GM12878 (cell line): ENCODE measurements at regions of chr2 and their contacts with region 1.

Region 1: GRCh38 chr2:196182439-196183171 is 11.2 kb upstream of the STK17B start:
- DNase-seq: peak; percentile 71
- ATAC-seq: peak; percentile 87
- H3K4me3 ChIP-seq: no peak overlapping the region
- H3K27ac ChIP-seq: peak overlapping the region; percentile 42
- H3K4me1 ChIP-seq: peaks cover 27% of the 10 kb centered on the region
- H3K27me3 ChIP-seq: no peaks in the 10 kb centered on the region
- CTCF ChIP-seq: no peak
- EP300 ChIP-seq: peak; percentile 31 to 64
- POLR2A ChIP-seq: no peak
- RAD21 ChIP-seq: no peak

Region 2: DNA sequence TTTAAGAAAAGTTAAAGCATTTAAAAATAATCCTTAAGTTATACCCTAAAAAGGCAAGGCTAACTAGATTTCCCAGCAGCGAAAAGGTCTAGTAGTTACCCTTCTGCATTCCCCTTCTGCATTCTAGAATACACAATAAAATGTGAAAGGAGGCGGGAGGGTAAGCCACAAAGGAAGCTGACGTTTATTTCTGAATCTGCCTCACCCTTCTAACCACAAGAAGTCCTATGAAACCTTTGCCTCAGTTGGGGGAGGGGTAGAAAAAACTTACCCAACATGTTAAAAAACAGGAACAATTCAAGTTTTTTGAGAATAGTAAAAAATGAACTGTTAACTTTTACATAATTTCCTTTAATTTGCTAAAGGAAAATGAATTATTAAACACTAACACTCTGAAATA is 22.5 kb before region 1 on chr2:
- CTCF ChIA-PET with region 1: interaction called, 11 read pairs
- POLR2A ChIA-PET with region 1: interaction called, 64 read pairs
- RAD21 ChIA-PET with region 1: interaction called, 93 read pairs
- SMC1A ChIA-PET with region 1: interaction called, 74 read pairs
- in situ Hi-C with region 1: no loop called
- intact Hi-C with region 1: no loop called
- DNase-seq: peak; percentile 86
- ATAC-seq: peak; percentile 64
- H3K4me3 ChIP-seq: no peak overlapping the region; the same call in 1 of the 2 replicates
- H3K27ac ChIP-seq: peak overlapping the region; percentile 77
- H3K4me1 ChIP-seq: peaks cover 29% of the 10 kb centered on the region
- H3K27me3 ChIP-seq: no peaks in the 10 kb centered on the region
- CTCF ChIP-seq: no peak
- EP300 ChIP-seq: peak; percentile 93
- POLR2A ChIP-seq: no peak
- RAD21 ChIP-seq: peak; percentile 17; the same call in 1 of the 2 replicates

Region 3: GRCh38 chr2:196213252-196213980 is 30.8 kb after region 1 on chr2:
- CTCF ChIA-PET with region 1: interaction called, 4 read pairs
- POLR2A ChIA-PET with region 1: interaction called, 9 read pairs
- RAD21 ChIA-PET with region 1: interaction called, 27 read pairs
- SMC1A ChIA-PET with region 1: interaction called, 17 read pairs
- in situ Hi-C with region 1: no loop called
- intact Hi-C with region 1: loop called (anchors 2 kb)
- DNase-seq: no peak
- ATAC-seq: no peak
- H3K4me3 ChIP-seq: no peak overlapping the region
- H3K27ac ChIP-seq: no peak overlapping the region
- H3K4me1 ChIP-seq: peaks cover 14% of the 10 kb centered on the region
- H3K27me3 ChIP-seq: no peaks in the 10 kb centered on the region
- CTCF ChIP-seq: no peak
- EP300 ChIP-seq: no peak
- POLR2A ChIP-seq: no peak
- RAD21 ChIP-seq: no peak

Region 4: DNA sequence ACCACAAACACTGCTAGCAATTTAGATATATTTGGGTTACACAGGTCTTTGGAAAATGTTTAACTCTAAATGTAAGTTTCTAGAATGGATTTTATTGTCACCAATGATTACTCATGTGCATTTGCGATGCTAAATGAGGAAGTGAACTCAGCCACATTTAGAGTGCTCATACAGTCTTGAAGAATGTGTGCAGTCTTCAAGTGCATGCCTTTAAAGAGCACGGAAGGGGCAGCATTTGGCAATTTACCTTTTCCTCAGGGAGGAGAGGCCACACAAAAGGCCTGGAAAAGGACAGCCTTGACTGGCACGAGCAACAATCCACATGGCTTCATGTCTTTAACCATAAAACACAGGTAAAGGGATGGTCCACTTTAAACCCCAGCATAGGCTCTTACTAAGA is 67.3 kb after region 1 on chr2:
- CTCF ChIA-PET with region 1: interaction called, 5 read pairs
- POLR2A ChIA-PET with region 1: interaction called, 10 read pairs
- RAD21 ChIA-PET with region 1: interaction called, 13 read pairs
- SMC1A ChIA-PET with region 1: interaction called, 12 read pairs
- in situ Hi-C with region 1: no loop called
- intact Hi-C with region 1: no loop called
- DNase-seq: no peak
- ATAC-seq: peak; percentile 92
- H3K4me3 ChIP-seq: no peak overlapping the region
- H3K27ac ChIP-seq: no peak overlapping the region
- H3K4me1 ChIP-seq: peaks cover 4% of the 10 kb centered on the region
- H3K27me3 ChIP-seq: no peaks in the 10 kb centered on the region
- CTCF ChIP-seq: no peak
- EP300 ChIP-seq: no peak; a peak in 1 of 4 replicates
- POLR2A ChIP-seq: no peak
- RAD21 ChIP-seq: peak; percentile 10; the same call in 1 of the 2 replicates

Region 5: DNA sequence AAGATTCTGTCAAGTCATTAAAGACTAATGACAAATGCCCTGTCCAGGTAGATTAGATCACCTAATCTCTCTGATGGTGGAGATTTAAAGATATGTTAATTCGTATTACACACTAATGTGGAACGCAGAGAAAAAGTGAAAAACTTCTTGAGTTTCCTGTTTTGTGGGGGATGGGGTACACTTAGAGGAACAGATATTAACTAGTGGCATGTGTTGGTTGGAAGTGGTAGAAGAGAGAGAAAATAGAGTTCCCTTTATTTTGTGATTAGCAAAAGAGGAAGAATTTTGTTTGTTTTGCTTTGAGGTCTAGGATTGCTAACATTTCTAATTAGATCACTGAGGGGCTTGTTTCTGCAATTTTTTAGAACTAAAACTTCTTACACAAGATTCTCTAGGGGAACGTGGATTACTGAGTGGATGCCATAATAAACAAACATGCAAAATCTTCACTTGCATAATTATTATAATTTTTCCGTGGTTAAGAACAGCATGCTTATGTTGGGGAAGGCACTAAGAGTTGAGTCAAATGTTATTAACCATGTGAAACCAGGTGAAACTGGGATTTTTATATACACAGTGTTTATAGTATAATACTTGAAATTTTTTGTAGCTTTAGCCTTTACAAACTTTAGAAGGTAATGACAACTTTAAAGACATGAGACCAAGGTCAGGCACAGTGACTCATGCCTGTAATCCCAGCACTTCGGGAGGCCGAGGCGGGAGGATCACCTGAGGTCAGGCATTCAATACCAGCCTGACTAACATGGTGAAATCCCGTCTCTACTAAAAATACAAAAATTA is 86.1 kb after region 1 on chr2:
- CTCF ChIA-PET with region 1: interaction called, 7 read pairs
- POLR2A ChIA-PET with region 1: interaction called, 27 read pairs
- RAD21 ChIA-PET with region 1: interaction called, 73 read pairs
- SMC1A ChIA-PET with region 1: interaction called, 57 read pairs
- in situ Hi-C with region 1: no loop called
- intact Hi-C with region 1: loop called (anchors 2 kb)
- DNase-seq: no peak
- ATAC-seq: peak; percentile 61
- H3K4me3 ChIP-seq: no peak overlapping the region
- H3K27ac ChIP-seq: peak overlapping the region; percentile 40
- H3K4me1 ChIP-seq: peaks cover 18% of the 10 kb centered on the region
- H3K27me3 ChIP-seq: no peaks in the 10 kb centered on the region
- CTCF ChIP-seq: no peak
- EP300 ChIP-seq: no peak
- POLR2A ChIP-seq: no peak
- RAD21 ChIP-seq: no peak

Region 6: GRCh38 chr2:196372811-196373664 is 190.4 kb after region 1 on chr2:
- CTCF ChIA-PET with region 1: no interaction called
- POLR2A ChIA-PET with region 1: no interaction called
- RAD21 ChIA-PET with region 1: no interaction called
- SMC1A ChIA-PET with region 1: no interaction called
- in situ Hi-C with region 1: no loop called
- intact Hi-C with region 1: no loop called
- DNase-seq: no peak
- ATAC-seq: no peak
- H3K4me3 ChIP-seq: no peak overlapping the region
- H3K27ac ChIP-seq: no peak overlapping the region
- H3K4me1 ChIP-seq: peaks cover 15% of the 10 kb centered on the region
- H3K27me3 ChIP-seq: no peaks in the 10 kb centered on the region
- CTCF ChIP-seq: no peak
- EP300 ChIP-seq: no peak
- POLR2A ChIP-seq: no peak
- RAD21 ChIP-seq: no peak